ENCODE measurements at regions of chr6 and their contacts with region 1.

Region 1: GRCh38 chr6:40587240-40588069 is at the start of gene LRFN2:
- DNase-seq: peak; percentile 92
- H3K4me3 ChIP-seq: peak within 1 kb of the TSS; percentile 48 to 61
- H3K27ac ChIP-seq: peak within 1 kb of the TSS in 1 of 2 experiments; percentile 82; a peak in 2 of 4 replicates
- H3K4me1 ChIP-seq: peaks cover 0 to 38% of the 10 kb centered on the region in 2 experiments; a peak in 1 of 4 replicates
- H3K27me3 ChIP-seq: peaks cover 20% of the 10 kb centered on the region; the same call in 1 of the 2 replicates
- CTCF ChIP-seq: peak; percentile 58
- EP300 ChIP-seq: no peak
- RAD21 ChIP-seq: peak; percentile 62
- polyA plus RNA-seq, gene LRFN2: 0.02 and 0.13 TPM in 2 replicates

Region 2: GRCh38 chr6:39980839-39981580 is 606.4 kb before region 1 on chr6:
- CTCF ChIA-PET with region 1: interaction called, 19 read pairs
- POLR2A ChIA-PET with region 1: no interaction called
- DNase-seq: peak; percentile 59
- H3K4me3 ChIP-seq: no peak overlapping the region; a peak in 1 of 4 replicates
- H3K27ac ChIP-seq: no peak overlapping the region
- H3K4me1 ChIP-seq: no peaks in the 10 kb centered on the region
- H3K27me3 ChIP-seq: no peaks in the 10 kb centered on the region
- CTCF ChIP-seq: peak; percentile 52
- EP300 ChIP-seq: no peak
- RAD21 ChIP-seq: peak; percentile 90

Region 3: DNA sequence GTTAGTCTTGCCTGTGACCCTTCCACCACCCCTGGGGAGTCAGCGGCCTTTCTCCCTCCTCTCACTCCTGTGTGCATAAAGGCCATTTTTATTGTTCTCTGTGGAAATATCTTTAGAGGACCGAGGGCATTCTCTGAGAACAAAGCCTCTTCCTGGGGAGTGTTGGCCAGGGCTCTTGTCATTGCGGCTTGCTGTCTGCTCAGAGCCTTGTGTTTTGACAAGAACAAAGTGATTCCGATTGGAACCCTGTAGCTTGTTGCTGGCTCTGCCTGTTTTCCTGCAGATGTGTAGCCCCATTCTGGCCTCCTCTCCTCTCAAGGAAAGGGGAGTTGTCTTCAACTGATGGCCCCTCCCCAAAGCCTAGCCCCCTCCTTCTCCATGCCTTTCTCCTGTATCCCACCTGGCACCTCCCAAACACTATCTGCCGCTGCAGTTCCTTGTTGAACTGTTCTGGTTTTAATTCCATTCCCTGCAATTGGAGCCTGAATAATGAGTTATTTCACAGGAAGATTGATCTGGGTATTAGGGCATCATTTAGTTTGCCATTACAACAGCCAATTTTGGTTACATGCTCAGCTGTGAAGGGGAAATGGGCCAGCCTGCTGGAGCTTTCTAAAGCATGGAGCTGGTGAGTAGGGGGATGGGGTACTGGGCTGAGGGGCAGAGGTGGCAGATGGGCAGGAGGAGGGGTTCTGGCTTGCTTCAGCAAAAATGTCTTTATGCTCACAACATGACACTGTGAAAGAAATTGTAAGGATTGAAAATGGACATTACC is 252.8 kb before region 1 on chr6:
- CTCF ChIA-PET with region 1: interaction called, 65 read pairs
- POLR2A ChIA-PET with region 1: no interaction called
- DNase-seq: no peak
- H3K4me3 ChIP-seq: no peak overlapping the region
- H3K27ac ChIP-seq: no peak overlapping the region
- H3K4me1 ChIP-seq: peaks cover 0 to 23% of the 10 kb centered on the region in 2 experiments; a peak in 1 of 4 replicates
- H3K27me3 ChIP-seq: no peaks in the 10 kb centered on the region
- CTCF ChIP-seq: no peak
- EP300 ChIP-seq: no peak
- RAD21 ChIP-seq: no peak

Region 4: DNA sequence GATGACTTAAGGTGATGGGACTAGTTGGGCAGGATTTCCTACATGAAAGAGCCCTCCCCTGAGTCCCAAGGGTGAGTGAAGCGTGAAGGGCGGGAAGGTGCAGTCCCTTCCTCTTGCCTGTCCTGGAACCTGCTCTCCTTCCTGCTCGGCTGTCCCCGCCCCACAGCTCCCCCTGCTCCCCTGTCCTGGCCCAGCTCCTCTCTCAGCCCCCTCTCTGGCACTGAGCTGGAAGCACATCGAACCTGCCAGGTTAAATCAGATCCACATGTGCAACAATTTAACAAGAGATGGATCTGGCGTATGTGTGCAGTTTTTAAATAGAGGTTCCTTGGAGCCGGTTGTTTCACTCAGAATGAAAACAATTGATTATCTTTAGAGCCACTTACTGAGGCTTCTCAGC is 95.3 kb before region 1 on chr6:
- CTCF ChIA-PET with region 1: interaction called, 18 read pairs
- POLR2A ChIA-PET with region 1: interaction called, 4 read pairs
- DNase-seq: peak; percentile 66
- H3K4me3 ChIP-seq: no peak overlapping the region
- H3K27ac ChIP-seq: peak overlapping the region in 1 of 2 experiments; percentile 89; a peak in 2 of 4 replicates
- H3K4me1 ChIP-seq: peaks cover 0 to 63% of the 10 kb centered on the region in 2 experiments; a peak in 1 of 4 replicates
- H3K27me3 ChIP-seq: no peaks in the 10 kb centered on the region
- CTCF ChIP-seq: no peak
- EP300 ChIP-seq: peak in 1 of 2 experiments; percentile 46; a peak in 1 of 4 replicates
- RAD21 ChIP-seq: peak; percentile 29; the same call in 1 of the 2 replicates

Region 5: GRCh38 chr6:40573221-40573620 is 14.2 kb before region 1 on chr6:
- CTCF ChIA-PET with region 1: interaction called, 15 read pairs
- POLR2A ChIA-PET with region 1: no interaction called
- DNase-seq: no peak
- H3K4me3 ChIP-seq: no peak overlapping the region
- H3K27ac ChIP-seq: no peak overlapping the region
- H3K4me1 ChIP-seq: peaks cover 0 to 29% of the 10 kb centered on the region in 2 experiments; a peak in 2 of 4 replicates
- H3K27me3 ChIP-seq: no peaks in the 10 kb centered on the region
- CTCF ChIP-seq: no peak
- EP300 ChIP-seq: no peak
- RAD21 ChIP-seq: no peak

Region 6: GRCh38 chr6:40719671-40720374 is 132.4 kb after region 1 on chr6:
- CTCF ChIA-PET with region 1: interaction called, 14 read pairs
- POLR2A ChIA-PET with region 1: interaction called, 3 read pairs
- DNase-seq: peak; percentile 56
- H3K4me3 ChIP-seq: peak overlapping the region in 1 of 2 experiments; percentile 13; a peak in 2 of 4 replicates
- H3K27ac ChIP-seq: peak overlapping the region; percentile 47 to 99
- H3K4me1 ChIP-seq: peaks cover 15 to 70% of the 10 kb centered on the region in 2 experiments; a peak in 3 of 4 replicates
- H3K27me3 ChIP-seq: no peaks in the 10 kb centered on the region
- CTCF ChIP-seq: no peak
- EP300 ChIP-seq: peak in 1 of 2 experiments; percentile 80; a peak in 2 of 4 replicates
- RAD21 ChIP-seq: no peak; the same call in none of the 2 replicates

Region 7: GRCh38 chr6:40922281-40922680 is 334.8 kb after region 1 on chr6:
- CTCF ChIA-PET with region 1: interaction called, 18 read pairs
- POLR2A ChIA-PET with region 1: no interaction called
- DNase-seq: no peak
- H3K4me3 ChIP-seq: no peak overlapping the region
- H3K27ac ChIP-seq: no peak overlapping the region
- H3K4me1 ChIP-seq: no peaks in the 10 kb centered on the region; a peak in 1 of 4 replicates
- H3K27me3 ChIP-seq: no peaks in the 10 kb centered on the region
- CTCF ChIP-seq: no peak
- EP300 ChIP-seq: no peak
- RAD21 ChIP-seq: no peak